Heart right ventricle (tissue), 16 donors: ENCODE measurements at regions of chr15 and their contacts with region 1.

Region 1: DNA sequence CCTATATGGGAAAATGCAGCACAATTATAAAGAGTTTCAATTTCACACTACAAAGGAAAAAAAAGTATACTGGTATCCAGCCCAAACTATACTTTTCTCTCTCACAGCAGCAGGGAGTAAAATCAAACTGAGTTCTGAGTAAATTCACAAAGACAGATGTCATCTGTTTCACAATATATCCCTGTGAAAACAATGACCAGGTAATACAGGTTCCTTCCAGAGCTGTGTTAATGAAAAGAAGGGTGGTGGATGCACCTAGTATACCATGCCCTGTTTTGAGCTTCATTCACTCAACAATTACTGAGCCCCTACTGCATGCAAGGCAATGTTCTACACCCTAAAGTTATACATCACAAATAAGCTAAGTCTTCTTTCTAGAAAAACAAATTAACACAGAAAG is 108.5 kb downstream of the TJP1 start:
- DNase-seq: no peak
- ATAC-seq: no peak
- H3K4me3 ChIP-seq: no peak overlapping the region
- H3K27ac ChIP-seq: no peak overlapping the region
- H3K4me1 ChIP-seq: peaks cover 0 to 14% (median 3%) of the 10 kb centered on the region in 9 donors
- H3K27me3 ChIP-seq: no peaks in the 10 kb centered on the region
- CTCF ChIP-seq: no peak

Region 2: GRCh38 chr15:29728418-29728817 is 14.6 kb after region 1 on chr15:
- intact Hi-C with region 1: loop called in 1 of 10 experiments (anchors 2 kb)
- DNase-seq: no peak
- ATAC-seq: peak in 4 of 8 donors; percentile 33 to 58 (median 48)
- H3K4me3 ChIP-seq: no peak overlapping the region
- H3K27ac ChIP-seq: no peak overlapping the region
- H3K4me1 ChIP-seq: peaks cover 0 to 16% (median 0%) of the 10 kb centered on the region in 9 donors
- H3K27me3 ChIP-seq: no peaks in the 10 kb centered on the region
- CTCF ChIP-seq: no peak